AG04449 (cell line): ENCODE measurements at regions of chr2 and their contacts with region 1.

Region 1: DNA sequence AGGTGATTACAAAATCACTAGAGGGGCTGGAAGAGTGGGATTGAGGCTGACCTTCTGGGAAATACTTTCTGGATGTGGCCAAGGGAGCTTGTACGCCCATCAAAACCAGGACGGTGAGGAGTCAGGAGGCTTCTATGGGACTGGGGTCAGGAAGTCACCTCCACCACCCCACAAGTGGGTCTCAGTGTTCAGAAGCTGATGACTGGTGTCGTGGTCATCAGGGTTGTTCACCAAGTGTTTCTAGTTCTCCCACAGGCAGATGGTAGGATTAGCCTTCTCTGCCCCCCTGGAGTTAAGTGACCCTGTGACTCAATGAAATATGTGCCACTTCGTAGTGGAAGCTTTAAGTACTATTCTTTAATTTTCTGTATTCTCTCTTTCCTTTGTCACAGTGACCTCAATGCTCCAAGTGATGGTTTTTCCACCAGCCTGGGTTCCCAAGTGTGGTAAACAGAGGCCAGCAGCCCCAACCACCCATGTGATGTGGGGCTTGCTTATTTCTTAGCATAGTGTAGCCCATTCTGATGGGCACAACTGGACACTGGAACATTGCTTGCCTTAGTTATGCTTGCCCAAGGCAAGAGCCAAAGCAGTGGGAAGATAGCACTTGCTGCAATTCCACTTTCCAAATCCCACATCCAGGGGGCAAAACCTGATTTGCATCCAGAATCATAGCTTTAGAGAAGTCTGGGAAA is 258.8 kb downstream of the CYP26B1 start:
- DNase-seq: no peak
- H3K4me3 ChIP-seq: no peak overlapping the region
- CTCF ChIP-seq: no peak

Region 2: GRCh38 chr2:71873594-71873993 is 15.3 kb before region 1 on chr2:
- CTCF ChIA-PET with region 1: interaction called, 10 read pairs
- POLR2A ChIA-PET with region 1: no interaction called
- DNase-seq: no peak
- H3K4me3 ChIP-seq: no peak overlapping the region
- CTCF ChIP-seq: no peak